ENCODE measurements at regions of chr11 and their contacts with region 1.

Region 1: DNA sequence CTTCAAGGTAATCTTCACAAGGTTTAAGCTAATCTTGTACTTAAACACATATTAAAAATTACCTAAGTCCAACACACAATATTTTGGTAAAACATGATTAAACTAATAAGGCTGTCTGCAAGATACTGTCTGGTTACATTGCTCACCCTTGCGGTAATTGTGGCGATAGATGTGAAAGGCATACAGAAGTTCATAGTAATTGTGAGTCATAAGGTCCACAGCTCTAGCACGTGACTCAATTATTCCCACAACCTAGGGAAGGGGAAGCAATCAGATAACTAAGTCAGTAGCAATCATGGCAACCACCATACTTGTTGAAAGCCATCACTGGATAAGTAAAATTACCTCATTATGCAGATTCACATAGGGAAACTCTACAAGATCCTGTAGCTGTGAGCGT is 30.5 kb upstream of the FNBP4 start:
- DNase-seq: peak; percentile 19
- H3K4me3 Mint-ChIP-seq: no peak overlapping the region
- H3K27ac Mint-ChIP-seq: peak overlapping the region; percentile 82
- H3K4me1 Mint-ChIP-seq: peaks cover 14% of the 10 kb centered on the region
- H3K27me3 Mint-ChIP-seq: no peaks in the 10 kb centered on the region

Region 2: GRCh38 chr11:47616726-47617416 is 180.8 kb before region 1 on chr11:
- intact Hi-C with region 1: no loop called
- DNase-seq: no peak
- H3K4me3 Mint-ChIP-seq: no peak overlapping the region
- H3K27ac Mint-ChIP-seq: no peak overlapping the region
- H3K4me1 Mint-ChIP-seq: peaks cover 5% of the 10 kb centered on the region
- H3K27me3 Mint-ChIP-seq: no peaks in the 10 kb centered on the region

Region 3: GRCh38 chr11:47750725-47751124 is 46.9 kb before region 1 on chr11:
- intact Hi-C with region 1: no loop called
- DNase-seq: no peak
- H3K4me3 Mint-ChIP-seq: no peak overlapping the region
- H3K27ac Mint-ChIP-seq: no peak overlapping the region
- H3K4me1 Mint-ChIP-seq: peaks cover 6% of the 10 kb centered on the region
- H3K27me3 Mint-ChIP-seq: no peaks in the 10 kb centered on the region

Region 4: GRCh38 chr11:47847892-47848635 is 50.4 kb after region 1 on chr11 and contains the start of gene NUP160:
- intact Hi-C with region 1: loop called (anchors 5 kb)
- DNase-seq: peak; percentile 85
- H3K4me3 Mint-ChIP-seq: peak within 1 kb of the TSS; percentile 97
- H3K27ac Mint-ChIP-seq: peak within 1 kb of the TSS; percentile 98
- H3K4me1 Mint-ChIP-seq: peaks cover 33% of the 10 kb centered on the region
- H3K27me3 Mint-ChIP-seq: no peaks in the 10 kb centered on the region
- total RNA-seq, gene NUP160: 81.2 and 84.7 TPM in 2 replicates

Region 5: GRCh38 chr11:48013269-48013901 is 215.8 kb after region 1 on chr11:
- intact Hi-C with region 1: loop called (anchors 5 kb)
- DNase-seq: no peak
- H3K4me3 Mint-ChIP-seq: peak overlapping the region; percentile 61
- H3K27ac Mint-ChIP-seq: peak overlapping the region; percentile 97
- H3K4me1 Mint-ChIP-seq: peaks cover 82% of the 10 kb centered on the region
- H3K27me3 Mint-ChIP-seq: no peaks in the 10 kb centered on the region